ENCODE measurements at regions of chr13 and their contacts with region 1.

Region 1: GRCh38 chr13:45718063-45718462 is 15.9 kb downstream of the CBY2 start:
- DNase-seq: peak; percentile 41
- ATAC-seq: no peak
- H3K4me3 ChIP-seq: no peak overlapping the region
- H3K27ac ChIP-seq: no peak overlapping the region
- H3K4me1 ChIP-seq: no peaks in the 10 kb centered on the region
- H3K27me3 ChIP-seq: no peaks in the 10 kb centered on the region
- CTCF ChIP-seq: peak; percentile 69

Region 2: GRCh38 chr13:45511310-45512097 is 206.6 kb before region 1 on chr13:
- CTCF ChIA-PET with region 1: no interaction called
- POLR2A ChIA-PET with region 1: no interaction called
- intact Hi-C with region 1: loop called (anchors 1 kb)
- DNase-seq: peak; percentile 77
- ATAC-seq: peak; percentile 65
- H3K4me3 ChIP-seq: peak overlapping the region; percentile 28; the same call in 1 of the 2 replicates
- H3K27ac ChIP-seq: peak overlapping the region; percentile 94
- H3K4me1 ChIP-seq: peaks cover 15% of the 10 kb centered on the region
- H3K27me3 ChIP-seq: no peaks in the 10 kb centered on the region
- CTCF ChIP-seq: peak; percentile 83

Region 3: GRCh38 chr13:45623515-45624090 is 94.5 kb before region 1 on chr13:
- CTCF ChIA-PET with region 1: no interaction called
- POLR2A ChIA-PET with region 1: no interaction called
- intact Hi-C with region 1: loop called (anchors 1 kb)
- DNase-seq: peak; percentile 45
- ATAC-seq: peak; percentile 42; the same call in 1 of the 2 replicates
- H3K4me3 ChIP-seq: no peak overlapping the region
- H3K27ac ChIP-seq: no peak overlapping the region
- H3K4me1 ChIP-seq: peaks cover 13% of the 10 kb centered on the region
- H3K27me3 ChIP-seq: 0 out of 2 replicates have a peak, but pooled peaks cover 4% of the 10 kb centered on the region
- CTCF ChIP-seq: peak; percentile 69

Region 4: GRCh38 chr13:46134961-46135522 is 417.0 kb after region 1 on chr13:
- CTCF ChIA-PET with region 1: no interaction called
- POLR2A ChIA-PET with region 1: no interaction called
- intact Hi-C with region 1: no loop called
- DNase-seq: peak; percentile 92
- ATAC-seq: peak; percentile 96
- H3K4me3 ChIP-seq: peak overlapping the region; percentile 28; the same call in 1 of the 2 replicates
- H3K27ac ChIP-seq: peak overlapping the region; percentile 68
- H3K4me1 ChIP-seq: peaks cover 19% of the 10 kb centered on the region
- H3K27me3 ChIP-seq: no peaks in the 10 kb centered on the region
- CTCF ChIP-seq: no peak

Measured in PC-3 (cell line).